CD4-positive, alpha-beta T cell (primary cell): ENCODE measurements at regions of chr12 and their contacts with region 1.

Region 1: GRCh38 chr12:6620137-6620884 is 13.1 kb upstream of the CHD4 start:
- DNase-seq: peak in 12 of 14 experiments; percentile 26 to 85 (median 50)
- ATAC-seq: peak; percentile 75
- H3K4me3 ChIP-seq: peak overlapping the region; percentile 17
- H3K4me3 Mint-ChIP-seq: peak overlapping the region; percentile 70
- H3K27ac ChIP-seq: peak overlapping the region in 1 of 2 donors; percentile 21
- H3K27ac Mint-ChIP-seq: peak overlapping the region; percentile 65
- H3K4me1 ChIP-seq: peaks cover 13% of the 10 kb centered on the region
- H3K4me1 Mint-ChIP-seq: peaks cover 15% of the 10 kb centered on the region
- H3K27me3 ChIP-seq: no peaks in the 10 kb centered on the region
- H3K27me3 Mint-ChIP-seq: no peaks in the 10 kb centered on the region
- CTCF ChIP-seq: peak; percentile 75

Region 2: DNA sequence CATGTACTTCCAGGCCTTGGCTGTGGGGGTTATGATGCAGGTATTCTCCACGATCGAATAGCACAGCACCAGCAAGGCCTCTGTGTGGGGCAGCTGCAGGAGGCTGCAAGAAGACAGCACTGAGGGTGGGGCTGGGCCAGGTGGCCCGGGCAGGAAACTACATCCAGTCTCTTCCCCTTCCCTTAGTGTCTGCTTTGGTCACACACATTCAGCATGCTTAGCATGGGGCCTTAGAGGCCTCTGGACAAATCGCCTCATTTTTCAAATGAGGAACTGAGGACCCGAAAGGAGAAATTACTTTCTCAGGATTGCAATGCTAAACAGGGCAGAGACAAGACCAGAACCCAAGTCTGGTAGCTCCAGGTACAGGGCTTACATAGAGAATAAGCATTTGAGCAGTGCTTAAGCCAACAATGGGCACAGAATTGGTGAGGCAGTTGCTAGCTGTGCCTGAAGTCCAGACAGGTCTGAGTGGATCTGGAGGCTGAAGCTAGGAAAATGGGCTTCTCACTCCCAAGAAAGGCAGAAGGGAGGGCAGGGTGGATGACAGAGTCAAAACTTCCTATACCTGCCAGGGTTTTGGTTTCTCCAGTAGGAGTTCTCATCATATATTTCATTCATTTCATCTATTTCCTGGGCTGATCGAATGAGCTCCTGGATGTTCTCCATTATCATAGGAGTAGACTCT is 23.4 kb after region 1 on chr12:
- CTCF ChIA-PET with region 1: no interaction called
- POLR2A ChIA-PET with region 1: interaction called, 3 read pairs
- intact Hi-C with region 1: loop called in 1 of 2 experiments (anchors 2 kb)
- DNase-seq: peak in 2 of 14 experiments; percentile 28 to 33
- ATAC-seq: no peak
- H3K4me3 ChIP-seq: no peak overlapping the region
- H3K4me3 Mint-ChIP-seq: no peak overlapping the region
- H3K27ac ChIP-seq: no peak overlapping the region
- H3K27ac Mint-ChIP-seq: no peak overlapping the region
- H3K4me1 ChIP-seq: peaks cover 15% of the 10 kb centered on the region
- H3K4me1 Mint-ChIP-seq: peaks cover 15% of the 10 kb centered on the region
- H3K27me3 ChIP-seq: no peaks in the 10 kb centered on the region
- H3K27me3 Mint-ChIP-seq: no peaks in the 10 kb centered on the region
- CTCF ChIP-seq: no peak